GM12878 (cell line): ENCODE measurements at regions of chr7 and their contacts with region 1.

Region 1: DNA sequence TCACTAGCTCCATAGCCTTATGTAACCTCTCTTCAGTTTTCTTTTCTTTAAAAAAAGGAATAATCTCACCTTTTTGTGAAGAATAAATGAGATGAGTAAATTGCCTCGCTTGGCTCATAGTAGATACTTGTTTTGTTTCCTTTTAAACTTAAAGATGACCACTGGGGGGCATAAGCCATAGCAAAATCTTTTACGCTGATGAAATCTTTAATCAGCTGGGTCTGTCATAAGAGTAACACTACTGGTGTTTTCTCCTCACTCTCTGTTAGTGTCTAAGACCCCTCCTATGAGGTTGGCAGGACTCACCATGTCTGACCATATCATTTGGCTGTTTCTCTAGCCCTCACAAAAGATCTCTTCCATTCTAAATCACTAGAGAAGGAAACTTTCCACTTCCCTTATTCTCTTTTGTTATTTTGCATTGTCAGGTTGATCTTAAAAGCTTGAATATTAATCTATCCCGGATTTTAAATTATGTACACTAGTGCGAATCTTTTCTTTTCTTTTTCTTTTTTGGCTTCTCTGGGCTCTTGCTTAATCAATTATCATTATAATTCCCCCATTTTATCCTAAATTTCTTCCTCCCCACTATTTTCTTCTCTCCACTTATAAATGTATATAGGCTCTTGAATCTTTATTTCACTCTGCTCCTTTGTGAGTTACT is 12.5 kb downstream of the STAG3 start:
- DNase-seq: no peak
- ATAC-seq: peak; percentile 83
- H3K4me3 ChIP-seq: no peak overlapping the region
- H3K27ac ChIP-seq: no peak overlapping the region
- H3K4me1 ChIP-seq: peaks cover 29% of the 10 kb centered on the region
- H3K27me3 ChIP-seq: no peaks in the 10 kb centered on the region
- CTCF ChIP-seq: peak; percentile 42 to 55 (median 44); a peak in 5 of 6 replicates
- EP300 ChIP-seq: no peak
- POLR2A ChIP-seq: no peak
- RAD21 ChIP-seq: peak; percentile 71

Region 2: DNA sequence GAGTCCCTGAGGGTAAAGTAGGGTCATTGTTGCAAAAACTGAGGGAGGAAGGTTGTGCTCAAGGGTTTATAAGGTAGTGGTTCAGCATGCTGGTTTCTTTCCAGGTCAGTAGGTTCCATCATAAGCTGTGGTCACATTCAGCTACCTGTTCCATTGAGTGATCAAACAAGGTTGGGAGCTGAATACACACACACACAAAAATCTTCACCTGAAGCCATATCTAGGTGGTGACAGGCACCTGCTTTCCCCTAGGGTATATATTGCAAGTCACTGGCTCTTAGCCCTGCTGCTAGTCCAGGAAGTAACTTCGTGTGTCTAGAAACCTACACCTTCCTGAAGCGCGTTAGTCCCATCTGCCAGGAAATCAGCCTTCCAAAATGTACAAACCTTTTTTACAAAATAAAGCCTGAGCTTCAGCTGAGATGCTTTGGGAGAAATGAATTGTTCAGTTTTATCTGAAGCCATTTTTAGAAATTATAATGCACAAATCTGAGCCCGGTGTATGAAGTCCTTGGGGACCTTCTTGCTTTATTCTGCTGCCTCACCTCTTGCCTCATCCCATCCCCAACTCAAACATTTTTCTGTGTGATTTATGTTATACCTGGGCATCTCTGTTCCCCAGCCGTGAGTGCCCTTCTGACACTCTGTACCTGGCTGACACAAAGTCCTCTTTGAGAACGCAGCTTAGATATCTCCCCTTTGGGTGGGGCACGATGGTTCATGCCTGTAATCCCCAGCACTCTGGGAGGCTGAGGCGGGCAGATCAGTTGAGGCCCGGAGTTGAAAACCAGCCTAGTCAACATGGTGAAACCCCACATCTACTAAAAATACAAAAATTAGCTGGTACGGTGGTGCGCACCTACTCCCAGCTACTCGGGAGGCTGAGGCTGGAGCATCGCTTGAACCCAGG is 52.1 kb before region 1 on chr7:
- CTCF ChIA-PET with region 1: interaction called, 37 read pairs
- POLR2A ChIA-PET with region 1: interaction called, 3 read pairs
- RAD21 ChIA-PET with region 1: interaction called, 11 read pairs
- SMC1A ChIA-PET with region 1: interaction called, 8 read pairs
- in situ Hi-C with region 1: no loop called
- intact Hi-C with region 1: no loop called
- DNase-seq: no peak
- ATAC-seq: peak; percentile 73
- H3K4me3 ChIP-seq: no peak overlapping the region
- H3K27ac ChIP-seq: no peak overlapping the region
- H3K4me1 ChIP-seq: peaks cover 14% of the 10 kb centered on the region
- H3K27me3 ChIP-seq: no peaks in the 10 kb centered on the region
- CTCF ChIP-seq: no peak
- EP300 ChIP-seq: no peak
- POLR2A ChIP-seq: no peak
- RAD21 ChIP-seq: no peak

Region 3: DNA sequence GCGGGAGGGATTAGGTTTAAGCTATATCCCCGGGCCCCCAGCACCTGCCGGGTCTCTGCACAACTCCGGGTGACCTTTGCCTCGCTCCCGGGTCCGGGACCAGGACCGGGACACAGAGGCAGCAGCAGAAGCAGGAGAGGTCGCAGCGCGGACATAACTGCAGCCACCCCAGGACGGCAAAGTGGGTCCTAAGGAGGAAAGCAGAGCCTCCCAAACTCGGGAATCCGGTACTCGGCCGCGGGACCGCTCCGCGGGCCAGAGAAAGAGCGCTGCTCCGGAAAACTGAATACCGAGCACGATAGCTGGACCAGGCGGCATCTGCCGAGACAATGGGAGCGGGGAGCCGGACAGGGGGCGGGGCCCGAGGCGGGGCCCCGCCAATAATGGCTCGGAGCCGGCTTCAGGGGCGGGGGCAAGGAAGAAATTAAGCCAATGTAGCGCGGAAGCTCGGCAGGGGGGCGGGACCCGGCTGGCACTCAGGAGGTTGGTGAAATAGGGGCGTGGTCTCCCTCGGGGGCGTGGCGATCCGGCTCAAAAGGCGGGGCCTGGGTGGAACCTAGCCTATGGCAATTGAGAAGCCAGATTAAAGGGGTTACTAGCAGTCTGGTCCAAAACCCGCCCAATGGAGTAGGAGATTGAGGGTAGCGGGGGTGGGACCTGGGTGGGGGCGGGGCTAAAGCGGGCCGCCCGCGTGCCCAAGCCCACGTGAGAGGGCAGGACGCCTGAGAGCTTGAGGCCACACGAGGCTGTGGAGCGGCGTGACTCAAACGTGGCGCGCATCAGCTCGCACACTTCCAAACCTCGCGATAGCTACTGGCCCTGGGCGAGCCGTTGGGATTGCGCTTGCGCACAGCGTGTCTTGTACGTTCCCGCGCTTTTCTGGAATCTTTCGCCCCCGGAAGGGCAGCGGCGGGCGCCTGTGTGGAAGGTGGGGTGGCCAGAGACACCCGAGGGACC is 12.9 kb before region 1 on chr7 and contains the starts of genes GPC2 and STAG3:
- CTCF ChIA-PET with region 1: interaction called, 36 read pairs
- POLR2A ChIA-PET with region 1: interaction called, 5 read pairs
- RAD21 ChIA-PET with region 1: interaction called, 8 read pairs
- SMC1A ChIA-PET with region 1: interaction called, 12 read pairs
- in situ Hi-C with region 1: no loop called
- intact Hi-C with region 1: no loop called
- DNase-seq: peak; percentile 76
- ATAC-seq: peak; percentile 99
- H3K4me3 ChIP-seq: peak within 1 kb of the TSS; percentile 85
- H3K27ac ChIP-seq: no peak within 1 kb of the TSS
- H3K4me1 ChIP-seq: peaks cover 7% of the 10 kb centered on the region
- H3K27me3 ChIP-seq: no peaks in the 10 kb centered on the region
- CTCF ChIP-seq: no peak
- EP300 ChIP-seq: no peak
- POLR2A ChIP-seq: no peak
- RAD21 ChIP-seq: no peak
- polyA plus RNA-seq, gene GPC2: 0.19 to 0.24 TPM
- polyA plus RNA-seq, gene STAG3: 281 to 306 TPM

Region 4: DNA sequence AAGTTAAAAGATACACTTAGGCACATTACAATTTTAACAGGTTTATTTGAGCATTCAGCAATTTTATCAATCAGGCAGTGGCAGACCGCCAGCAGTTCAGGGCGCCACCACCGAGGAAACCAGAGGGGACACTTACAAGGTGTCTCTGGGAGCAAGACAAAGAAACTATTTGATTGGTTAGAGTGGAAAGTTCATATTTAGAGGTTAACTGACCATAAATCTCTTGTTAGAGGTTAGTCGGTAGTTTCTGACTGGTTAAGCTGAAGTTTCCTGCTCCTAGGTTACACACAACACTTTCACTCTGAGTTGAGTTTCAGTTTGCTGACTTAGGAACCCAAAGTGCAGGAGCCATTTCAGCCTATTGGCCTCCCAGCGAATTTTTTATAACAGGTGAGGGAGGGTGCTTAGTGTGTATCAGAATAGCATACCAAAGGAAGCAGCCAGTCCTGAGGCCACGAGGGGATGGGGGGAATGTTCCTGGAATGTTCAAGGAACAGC is 18.8 kb after region 1 on chr7:
- CTCF ChIA-PET with region 1: interaction called, 113 read pairs
- POLR2A ChIA-PET with region 1: interaction called, 60 read pairs
- RAD21 ChIA-PET with region 1: interaction called, 30 read pairs
- SMC1A ChIA-PET with region 1: interaction called, 140 read pairs
- in situ Hi-C with region 1: no loop called
- intact Hi-C with region 1: no loop called
- DNase-seq: peak; percentile 87
- ATAC-seq: peak; percentile 89
- H3K4me3 ChIP-seq: peak overlapping the region; percentile 56; the same call in 1 of the 2 replicates
- H3K27ac ChIP-seq: peak overlapping the region; percentile 57
- H3K4me1 ChIP-seq: peaks cover 51% of the 10 kb centered on the region
- H3K27me3 ChIP-seq: no peaks in the 10 kb centered on the region
- CTCF ChIP-seq: peak in 1 of 3 experiments; percentile 25; a peak in 1 of 6 replicates
- EP300 ChIP-seq: peak; percentile 27 to 74; a peak in 3 of 4 replicates
- POLR2A ChIP-seq: no peak
- RAD21 ChIP-seq: no peak

Region 5: GRCh38 chr7:100221231-100221718 is 31.1 kb after region 1 on chr7:
- CTCF ChIA-PET with region 1: interaction called, 113 read pairs
- POLR2A ChIA-PET with region 1: interaction called, 10 read pairs
- RAD21 ChIA-PET with region 1: interaction called, 35 read pairs
- SMC1A ChIA-PET with region 1: interaction called, 140 read pairs
- in situ Hi-C with region 1: no loop called
- intact Hi-C with region 1: loop called (anchors 2 kb)
- DNase-seq: peak; percentile 82
- ATAC-seq: peak; percentile 60
- H3K4me3 ChIP-seq: peak overlapping the region; percentile 63
- H3K27ac ChIP-seq: peak overlapping the region; percentile 99
- H3K4me1 ChIP-seq: peaks cover 44% of the 10 kb centered on the region
- H3K27me3 ChIP-seq: no peaks in the 10 kb centered on the region
- CTCF ChIP-seq: no peak
- EP300 ChIP-seq: peak; percentile 91 to 94
- POLR2A ChIP-seq: peak; percentile 84
- RAD21 ChIP-seq: no peak